BJ (cell line): ENCODE measurements at regions of chr11 and their contacts with region 1.

Region 1: GRCh38 chr11:128522055-128522942 is 65.1 kb downstream of the ETS1 start:
- DNase-seq: peak; percentile 95
- H3K4me3 ChIP-seq: peak overlapping the region; percentile 76
- H3K27me3 ChIP-seq: no peaks in the 10 kb centered on the region
- CTCF ChIP-seq: no peak

Region 2: DNA sequence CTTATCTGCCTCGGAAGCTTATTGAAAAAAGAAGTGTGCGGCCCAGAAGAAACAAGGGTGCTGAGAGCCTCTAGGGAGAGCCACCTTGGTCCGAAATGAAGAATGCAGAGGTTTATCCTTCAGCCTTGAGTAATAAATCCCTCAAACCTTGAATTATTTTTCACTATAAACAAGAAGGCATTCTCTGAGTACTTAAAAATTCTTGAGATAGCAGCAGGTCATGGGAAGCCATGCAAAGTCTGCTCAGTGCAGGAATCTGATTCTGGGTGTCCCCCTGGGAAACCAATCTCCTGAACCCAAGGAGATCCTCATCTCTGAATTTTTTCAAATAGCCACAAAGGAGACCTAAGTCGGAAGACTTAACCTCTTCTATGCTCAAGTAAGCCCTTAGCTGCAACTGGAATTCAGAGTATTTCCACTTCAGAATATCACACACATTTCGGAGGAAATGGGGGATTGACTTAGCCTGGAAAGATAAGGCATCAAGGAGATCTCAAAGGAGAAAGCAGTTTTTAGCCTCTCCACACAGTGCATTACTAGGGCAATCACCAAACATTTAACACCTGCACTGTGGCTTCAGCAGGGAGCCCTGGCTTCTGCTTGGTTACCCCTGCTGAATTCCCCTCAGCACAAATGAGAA is 299.9 kb before region 1 on chr11:
- CTCF ChIA-PET with region 1: no interaction called
- POLR2A ChIA-PET with region 1: interaction called, 19 read pairs
- DNase-seq: no peak
- H3K4me3 ChIP-seq: no peak overlapping the region
- H3K27me3 ChIP-seq: no peaks in the 10 kb centered on the region
- CTCF ChIP-seq: no peak

Region 3: DNA sequence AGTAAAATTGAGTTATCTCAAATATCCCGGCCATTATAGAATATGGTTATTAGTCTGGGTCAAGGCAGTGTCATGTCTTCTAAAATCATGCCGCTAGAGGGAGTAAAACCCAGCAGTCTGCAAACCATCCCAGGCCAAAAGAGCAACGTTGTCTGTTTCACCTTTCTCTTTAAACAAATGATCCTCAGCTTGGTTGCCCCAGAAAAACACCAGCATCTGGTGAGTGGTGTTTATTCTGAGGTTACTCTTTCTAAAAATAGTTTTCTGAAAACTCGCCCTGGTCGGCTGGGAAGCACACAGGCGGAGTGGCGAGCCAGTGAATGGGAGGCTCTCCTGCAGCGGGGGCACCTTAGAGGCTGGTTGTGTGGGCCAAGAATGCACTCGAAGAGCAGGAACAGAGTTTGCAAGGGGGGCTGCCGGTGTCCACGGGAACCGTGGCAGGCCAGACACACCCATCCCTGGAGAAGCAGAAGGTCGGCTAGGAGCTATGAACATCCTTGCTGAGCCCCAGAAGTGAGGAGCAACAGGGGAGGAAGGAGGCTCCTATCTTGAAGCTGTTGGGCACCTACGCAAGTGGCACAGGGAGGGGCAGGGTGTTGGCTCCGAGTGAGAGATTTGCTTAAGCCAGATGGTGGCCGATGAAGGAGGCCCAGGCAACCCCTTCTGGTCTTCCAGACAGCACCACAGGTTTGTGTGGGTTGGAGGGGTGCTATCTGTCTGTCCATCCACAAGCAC is 232.0 kb before region 1 on chr11:
- CTCF ChIA-PET with region 1: interaction called, 13 read pairs
- POLR2A ChIA-PET with region 1: no interaction called
- DNase-seq: peak; percentile 67
- H3K4me3 ChIP-seq: no peak overlapping the region
- H3K27me3 ChIP-seq: no peaks in the 10 kb centered on the region
- CTCF ChIP-seq: peak; percentile 75

Region 4: DNA sequence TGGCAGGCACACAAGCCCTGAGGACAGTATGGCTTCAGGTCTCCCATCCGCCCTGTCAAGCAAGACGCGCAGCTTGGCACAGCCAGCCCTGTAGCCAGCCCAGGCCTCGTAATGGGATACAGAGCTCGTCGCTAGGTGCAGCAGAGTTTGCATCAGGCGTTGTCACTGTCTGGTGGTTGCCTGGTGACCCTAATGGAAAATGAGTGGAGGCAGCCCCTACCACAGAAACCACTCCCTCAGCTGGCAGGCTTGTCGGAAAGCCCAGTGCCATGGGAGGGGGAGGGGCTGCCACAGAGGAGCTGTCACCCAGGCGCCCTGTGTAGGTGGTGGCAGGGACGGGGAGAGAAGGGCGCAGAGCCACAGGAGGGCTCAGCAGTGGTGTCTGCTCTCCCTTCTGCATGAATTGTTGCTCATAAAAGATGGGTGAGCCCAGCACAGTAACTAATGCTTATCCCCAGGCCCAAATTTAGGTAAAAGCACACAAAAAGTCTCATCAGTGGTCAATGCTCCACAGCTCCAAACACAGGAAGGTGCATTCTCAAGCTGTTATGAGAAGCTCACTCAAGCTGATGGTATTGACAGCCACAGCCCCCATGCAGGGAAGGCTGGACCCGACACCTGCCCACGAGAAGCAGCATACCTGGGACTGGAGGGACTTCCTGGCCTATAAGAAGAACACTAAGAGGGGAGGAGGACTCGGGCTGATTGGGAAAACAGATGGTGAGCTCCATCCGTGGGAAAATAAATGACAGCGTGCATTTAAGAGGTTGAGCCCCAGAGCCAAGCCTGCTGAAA is 99.5 kb before region 1 on chr11:
- CTCF ChIA-PET with region 1: no interaction called
- POLR2A ChIA-PET with region 1: no interaction called
- DNase-seq: no peak
- H3K4me3 ChIP-seq: no peak overlapping the region
- H3K27me3 ChIP-seq: no peaks in the 10 kb centered on the region
- CTCF ChIP-seq: no peak

Region 5: DNA sequence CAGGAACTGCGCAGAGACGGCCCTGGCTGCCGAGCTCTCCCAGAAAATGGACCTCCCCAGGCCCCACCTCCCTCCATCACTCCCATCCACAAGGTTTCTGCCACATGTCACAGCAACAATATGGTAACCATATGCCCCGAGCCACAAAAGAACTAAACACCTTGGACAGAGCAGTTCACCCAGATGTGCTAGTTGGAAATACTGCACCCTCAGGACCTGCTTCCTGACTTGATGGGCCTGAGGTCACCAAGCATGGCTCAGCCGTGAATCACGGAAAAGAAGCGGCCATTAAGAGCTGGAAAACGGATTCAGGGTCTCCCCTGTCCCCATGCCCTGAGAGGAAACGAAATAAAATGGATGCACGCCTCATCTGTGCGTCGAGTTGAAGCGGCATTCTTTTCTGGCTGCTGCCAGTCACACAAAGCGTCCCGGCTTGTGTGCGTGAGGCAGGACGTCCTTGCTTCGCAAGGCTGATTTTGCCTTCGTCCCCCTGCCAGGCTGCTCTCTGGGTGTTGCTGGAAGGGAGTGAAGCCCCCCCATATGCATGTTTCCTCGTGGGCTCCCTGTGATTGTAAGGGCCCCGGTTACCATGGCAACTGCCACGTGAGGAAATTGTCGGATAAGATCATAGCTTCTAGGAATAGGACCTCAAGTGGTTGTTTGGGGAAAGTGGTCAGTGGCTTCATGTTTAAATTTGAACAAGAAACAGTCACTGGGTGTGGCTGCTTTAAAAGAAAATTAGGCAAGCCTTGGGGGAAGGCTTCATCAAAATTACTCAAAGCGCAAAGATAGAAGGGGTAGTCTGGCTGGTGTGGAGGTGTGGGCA is 223.2 kb after region 1 on chr11:
- CTCF ChIA-PET with region 1: no interaction called
- POLR2A ChIA-PET with region 1: no interaction called
- DNase-seq: no peak
- H3K4me3 ChIP-seq: no peak overlapping the region
- H3K27me3 ChIP-seq: no peaks in the 10 kb centered on the region
- CTCF ChIP-seq: 0 out of 2 replicates have a peak, but pooled peaks have one; percentile 16